Activated B cell treated with CpG ODN at 0.5 μM for 24 hours (primary cell): ENCODE measurements at regions of chr1 and their contacts with region 1.

Region 1: DNA sequence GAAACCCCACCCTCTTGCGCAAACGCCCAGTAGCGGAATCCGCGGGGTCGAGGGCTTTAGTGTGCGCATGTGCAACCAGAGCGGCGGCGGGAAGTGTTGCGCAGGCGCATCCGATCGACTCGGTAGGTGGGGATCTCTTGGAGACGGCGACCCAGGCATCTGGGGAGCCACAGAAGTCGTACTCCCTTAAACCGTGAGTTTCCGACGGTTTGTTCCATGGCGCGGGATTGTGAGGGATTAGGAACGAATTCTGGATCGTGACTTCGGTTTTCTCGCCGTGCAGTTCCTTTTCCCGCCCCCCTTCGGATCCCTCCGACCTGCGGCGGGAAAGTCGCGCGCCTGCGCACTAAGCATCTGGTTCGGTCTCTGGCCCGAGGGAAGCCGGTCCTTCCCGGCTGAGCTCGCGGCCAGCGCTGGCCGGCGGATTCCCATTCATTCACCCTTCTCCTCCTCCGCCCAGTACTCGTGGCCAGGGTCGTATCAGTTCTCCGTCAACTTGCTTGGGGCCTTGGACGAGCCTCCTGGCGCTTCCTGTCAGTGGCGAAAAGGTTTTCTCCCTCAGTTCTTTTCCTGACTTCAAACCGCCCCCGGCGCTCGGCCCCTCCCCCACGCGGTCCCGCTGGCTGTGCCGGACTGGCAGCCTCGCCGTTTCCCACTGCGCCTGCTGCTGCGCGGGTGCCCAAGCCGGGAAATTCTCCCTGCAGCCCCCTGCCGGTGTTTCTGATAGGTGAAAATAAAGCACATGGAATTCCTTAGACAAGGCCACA is at the start of gene CDC7:
- DNase-seq: peak; percentile 83
- ATAC-seq: peak; percentile 88
- H3K4me3 Mint-ChIP-seq: no peak within 1 kb of the TSS
- H3K27ac Mint-ChIP-seq: no peak within 1 kb of the TSS
- H3K4me1 Mint-ChIP-seq: peaks cover 16% of the 10 kb centered on the region
- H3K27me3 Mint-ChIP-seq: no peaks in the 10 kb centered on the region
- CTCF ChIP-seq: no peak
- total RNA-seq, gene CDC7: 5.8 and 7.3 TPM in 2 replicates

Region 2: GRCh38 chr1:91404151-91405012 is 96.6 kb before region 1 on chr1 and contains the start of gene HFM1:
- CTCF ChIA-PET with region 1: no interaction called
- POLR2A ChIA-PET with region 1: no interaction called
- intact Hi-C with region 1: loop called (anchors 5 kb)
- DNase-seq: peak; percentile 45
- ATAC-seq: peak; percentile 97
- H3K4me3 Mint-ChIP-seq: peak within 1 kb of the TSS; percentile 80
- H3K27ac Mint-ChIP-seq: no peak within 1 kb of the TSS
- H3K4me1 Mint-ChIP-seq: peaks cover 10% of the 10 kb centered on the region
- H3K27me3 Mint-ChIP-seq: peaks cover 22% of the 10 kb centered on the region
- CTCF ChIP-seq: no peak
- total RNA-seq, gene HFM1: 0.07 and 0.29 TPM in 2 replicates

Region 3: GRCh38 chr1:91439016-91439415 is 61.9 kb before region 1 on chr1:
- CTCF ChIA-PET with region 1: no interaction called
- POLR2A ChIA-PET with region 1: no interaction called
- intact Hi-C with region 1: no loop called
- DNase-seq: no peak
- ATAC-seq: no peak
- H3K4me3 Mint-ChIP-seq: no peak overlapping the region
- H3K27ac Mint-ChIP-seq: no peak overlapping the region
- H3K4me1 Mint-ChIP-seq: no peaks in the 10 kb centered on the region
- H3K27me3 Mint-ChIP-seq: peaks cover 13% of the 10 kb centered on the region
- CTCF ChIP-seq: no peak

Region 4: GRCh38 chr1:92080128-92080985 is 579.4 kb after region 1 on chr1 and contains the start of gene BTBD8:
- CTCF ChIA-PET with region 1: no interaction called
- POLR2A ChIA-PET with region 1: no interaction called
- intact Hi-C with region 1: loop called (anchors 1 kb)
- DNase-seq: peak; percentile 71
- ATAC-seq: peak; percentile 97
- H3K4me3 Mint-ChIP-seq: peak within 1 kb of the TSS; percentile 94
- H3K27ac Mint-ChIP-seq: peak within 1 kb of the TSS; percentile 5
- H3K4me1 Mint-ChIP-seq: peaks cover 7% of the 10 kb centered on the region
- H3K27me3 Mint-ChIP-seq: peaks cover 2% of the 10 kb centered on the region
- CTCF ChIP-seq: no peak
- total RNA-seq, gene BTBD8: 0.46 and 0.51 TPM in 2 replicates